ENCODE measurements at regions of chr18 and their contacts with region 1.

Region 1: DNA sequence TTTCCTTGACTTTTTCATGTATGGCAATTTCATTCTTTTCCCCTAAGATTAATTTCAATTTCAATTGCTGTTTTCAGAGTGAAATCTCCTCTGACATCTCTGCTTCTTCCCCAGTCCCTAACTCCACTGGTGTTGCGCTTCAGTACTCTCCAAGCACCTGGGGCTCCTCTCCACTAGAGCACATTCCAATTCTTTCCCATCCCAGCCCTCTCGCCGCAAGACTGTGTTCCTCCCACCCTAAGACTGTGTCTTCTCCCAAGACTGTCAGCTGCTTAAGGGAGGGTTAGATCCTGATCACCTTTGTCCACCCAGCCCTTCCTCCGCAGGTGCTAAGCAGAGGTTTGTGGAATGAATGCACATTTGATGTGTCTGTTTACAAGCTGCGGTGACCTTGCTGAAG is 255.7 kb upstream of the CCDC68 start:
- DNase-seq: no peak
- ATAC-seq: no peak
- H3K4me3 ChIP-seq: no peak overlapping the region
- H3K27ac ChIP-seq: no peak overlapping the region
- H3K4me1 ChIP-seq: peaks cover 0 to 8% (median under 1%) of the 10 kb centered on the region in 12 donors
- H3K27me3 ChIP-seq: no peaks in the 10 kb centered on the region
- CTCF ChIP-seq: no peak
- POLR2A ChIP-seq: no peak

Region 2: DNA sequence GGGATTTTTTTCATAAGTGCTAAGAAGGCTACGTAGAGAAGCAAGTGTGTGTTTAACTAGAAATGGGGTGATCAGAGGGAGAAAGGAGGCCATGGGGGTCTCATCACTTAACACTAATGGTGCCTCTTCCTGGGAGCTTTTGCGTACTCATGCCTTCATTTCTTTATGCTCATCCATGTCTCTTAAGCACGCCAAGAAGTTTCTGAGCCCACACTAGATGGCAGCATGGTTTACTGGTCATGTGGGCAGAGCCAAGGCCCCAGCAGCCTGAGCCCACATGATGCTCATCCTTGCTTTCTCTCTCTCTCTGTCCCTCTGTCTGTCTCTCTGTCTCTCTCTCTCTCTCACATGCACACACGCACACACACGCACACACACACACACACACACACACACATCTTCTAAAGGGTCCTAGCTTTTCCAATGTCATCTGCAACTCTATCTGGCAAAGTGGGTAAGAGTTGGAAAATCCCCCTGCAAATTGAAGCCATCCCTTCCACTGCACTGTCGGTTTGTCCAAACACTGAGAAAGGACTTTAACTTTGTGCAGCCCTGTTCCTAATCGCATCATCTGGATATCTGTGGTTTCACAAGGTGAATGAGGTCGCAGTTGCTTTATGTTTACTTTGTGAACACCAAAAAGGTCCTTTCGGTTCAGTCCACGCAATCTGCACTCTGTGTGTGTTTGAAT is 118.6 kb before region 1 on chr18:
- intact Hi-C with region 1: loop called in 2 of 10 experiments (anchors 5 to 10 kb)
- DNase-seq: peak in 4 of 5 donors; percentile 38 to 44 (median 41)
- ATAC-seq: peak; percentile 77 to 87 (median 80)
- H3K4me3 ChIP-seq: no peak overlapping the region
- H3K27ac ChIP-seq: no peak overlapping the region
- H3K4me1 ChIP-seq: peaks cover 0 to 15% (median 5%) of the 10 kb centered on the region in 12 donors
- H3K27me3 ChIP-seq: no peaks in the 10 kb centered on the region
- CTCF ChIP-seq: peak in 11 of 12 donors; percentile 23 to 59 (median 36)
- POLR2A ChIP-seq: no peak

Region 3: DNA sequence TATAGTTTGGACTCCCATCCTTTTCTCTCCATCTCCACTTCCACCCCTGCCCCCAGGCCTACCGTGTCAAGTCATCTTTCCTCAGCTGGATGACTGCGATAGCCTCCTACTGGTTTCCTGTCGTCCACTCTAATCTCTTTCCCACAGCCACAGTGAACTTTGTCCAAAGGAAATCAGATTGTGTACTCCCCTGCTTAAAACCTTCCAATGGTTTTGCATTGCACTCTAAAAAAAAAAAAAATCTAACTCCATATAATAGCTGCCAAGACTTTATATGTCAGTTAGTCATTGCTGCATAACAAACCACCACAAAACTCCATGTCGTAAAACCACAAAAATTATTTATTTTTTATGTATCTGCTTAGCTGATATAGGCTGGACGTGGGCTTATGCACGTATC is 95.5 kb before region 1 on chr18:
- intact Hi-C with region 1: loop called in 4 of 10 experiments (anchors 5 to 10 kb)
- DNase-seq: peak in 1 of 5 donors; percentile 33
- ATAC-seq: peak in 3 of 4 donors; percentile 42 to 83 (median 44)
- H3K4me3 ChIP-seq: no peak overlapping the region
- H3K27ac ChIP-seq: peak overlapping the region in 11 of 12 donors; percentile 2 to 66 (median 37)
- H3K4me1 ChIP-seq: peaks cover 0 to 26% (median 2%) of the 10 kb centered on the region in 12 donors
- H3K27me3 ChIP-seq: no peaks in the 10 kb centered on the region
- CTCF ChIP-seq: no peak
- POLR2A ChIP-seq: no peak

Region 4: GRCh38 chr18:56593906-56594305 is 1378.9 kb after region 1 on chr18:
- intact Hi-C with region 1: loop called in 1 of 10 experiments (anchors 10 kb)
- DNase-seq: no peak
- ATAC-seq: no peak
- H3K4me3 ChIP-seq: no peak overlapping the region
- H3K27ac ChIP-seq: no peak overlapping the region
- H3K4me1 ChIP-seq: no peaks in the 10 kb centered on the region
- H3K27me3 ChIP-seq: no peaks in the 10 kb centered on the region
- CTCF ChIP-seq: no peak
- POLR2A ChIP-seq: no peak

Measured in heart left ventricle (tissue), 16 donors.